Upper lobe of right lung (tissue), 1 donor: ENCODE measurements at regions of chr5 and their contacts with region 1.

Region 1: DNA sequence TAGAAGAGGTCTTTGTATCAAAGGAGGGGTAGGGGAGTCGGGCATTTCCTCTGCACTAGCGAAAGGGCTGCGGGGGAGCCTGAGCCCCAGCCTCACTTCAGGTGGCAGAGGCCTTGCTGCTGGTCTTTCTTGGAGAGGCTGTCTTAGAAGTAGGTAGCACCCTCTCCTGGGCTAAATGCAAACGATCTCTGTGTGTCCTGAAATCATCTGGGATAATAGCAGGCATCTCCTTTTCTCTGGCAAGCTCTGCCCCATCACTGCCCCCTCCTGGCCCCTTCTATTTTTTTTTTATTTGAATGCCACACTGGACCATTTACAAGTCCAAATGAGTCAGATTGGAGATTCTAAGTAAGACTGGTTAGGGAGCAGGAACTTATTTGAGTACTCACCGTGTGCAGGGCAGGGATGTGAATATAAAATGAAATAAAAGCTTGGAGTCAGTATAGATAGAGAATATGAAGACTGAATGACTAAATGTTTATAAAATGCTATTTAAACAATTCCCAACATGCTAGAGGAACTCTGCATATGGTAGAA is 137.1 kb downstream of the FGF1 start:
- DNase-seq: no peak
- ATAC-seq: peak; percentile 96
- H3K4me3 ChIP-seq: no peak overlapping the region
- H3K27ac ChIP-seq: no peak overlapping the region
- H3K4me1 ChIP-seq: peaks cover 16% of the 10 kb centered on the region
- H3K27me3 ChIP-seq: peaks cover 7% of the 10 kb centered on the region
- CTCF ChIP-seq: peak; percentile 80

Region 2: DNA sequence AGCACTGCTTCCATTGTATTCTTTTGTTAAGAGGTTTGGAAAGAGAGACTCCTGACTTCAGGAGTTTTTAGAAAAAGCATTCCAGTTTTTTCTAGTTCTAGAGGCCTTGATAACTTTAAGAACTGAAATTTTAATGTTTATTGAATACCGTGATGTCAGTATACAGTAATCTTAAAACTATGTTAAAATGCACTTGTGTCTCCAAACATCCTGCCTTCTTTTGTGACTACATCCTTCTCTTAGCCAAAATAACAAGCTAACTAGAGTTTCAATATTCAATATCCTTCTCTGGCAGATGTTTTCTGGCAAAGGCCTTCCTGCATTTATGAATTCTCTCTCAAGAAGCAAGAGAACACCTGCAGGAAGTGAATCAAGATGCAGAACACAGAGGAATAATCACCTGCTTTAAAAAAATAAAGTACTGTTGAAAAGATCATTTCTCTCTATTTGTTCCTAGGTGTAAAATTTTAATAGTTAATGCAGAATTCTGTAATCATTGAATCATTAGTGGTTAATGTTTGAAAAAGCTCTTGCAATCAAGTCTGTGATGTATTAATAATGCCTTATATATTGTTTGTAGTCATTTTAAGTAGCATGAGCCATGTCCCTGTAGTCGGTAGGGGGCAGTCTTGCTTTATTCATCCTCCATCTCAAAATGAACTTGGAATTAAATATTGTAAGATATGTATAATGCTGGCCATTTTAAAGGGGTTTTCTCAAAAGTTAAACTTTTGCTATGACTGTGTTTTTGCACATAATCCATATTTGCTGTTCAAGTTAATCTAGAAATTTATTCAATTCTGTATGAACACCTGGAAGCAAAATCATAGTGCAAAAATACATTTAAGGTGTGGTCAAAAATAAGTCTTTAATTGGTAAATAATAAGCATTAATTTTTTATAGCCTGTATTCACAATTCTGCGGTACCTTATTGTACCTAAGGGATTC is 397.1 kb before region 1 on chr5:
- intact Hi-C with region 1: loop called (anchors 5 kb)
- DNase-seq: no peak
- ATAC-seq: peak; percentile 85
- H3K4me3 ChIP-seq: no peak overlapping the region
- H3K27ac ChIP-seq: no peak overlapping the region
- H3K4me1 ChIP-seq: no peaks in the 10 kb centered on the region
- H3K27me3 ChIP-seq: no peaks in the 10 kb centered on the region
- CTCF ChIP-seq: peak; percentile 86